Adrenal gland (tissue), 19 donors: ENCODE measurements at regions of chr16 and their contacts with region 1.

Region 1: DNA sequence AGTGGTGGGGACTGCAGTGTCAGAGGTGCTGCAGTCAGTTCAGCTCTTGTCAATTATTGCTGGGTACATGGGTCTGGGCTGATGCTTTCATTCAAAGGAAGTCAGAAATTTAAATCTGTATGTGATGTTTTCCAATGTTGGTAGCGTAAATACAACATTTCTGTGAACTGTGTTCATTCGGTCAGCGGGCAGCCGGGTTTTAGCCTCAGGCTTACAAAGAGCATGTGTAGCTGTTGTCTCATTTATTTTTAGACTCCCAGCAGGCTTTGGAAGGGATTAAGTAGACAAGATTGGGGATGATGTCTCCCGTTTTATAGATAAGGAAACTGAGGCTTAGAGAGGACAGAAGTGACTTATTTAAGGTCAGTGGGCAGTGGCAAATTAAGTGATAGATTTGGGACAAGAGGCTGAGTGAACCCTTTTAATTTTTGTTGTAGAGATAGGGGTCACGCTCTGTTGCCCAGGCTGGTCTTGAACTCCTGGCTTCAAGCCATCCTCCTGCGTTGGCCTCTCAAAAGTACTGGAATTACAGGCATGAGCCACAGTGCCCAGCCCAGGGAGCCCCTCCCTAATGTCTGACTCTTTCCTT is 8.1 kb downstream of the AQP8 start:
- DNase-seq: no peak
- H3K4me3 ChIP-seq: no peak overlapping the region
- H3K27ac ChIP-seq: no peak overlapping the region
- H3K4me1 ChIP-seq: no peaks in the 10 kb centered on the region
- H3K27me3 ChIP-seq: no peaks in the 10 kb centered on the region
- CTCF ChIP-seq: no peak
- POLR2A ChIP-seq: no peak

Region 2: DNA sequence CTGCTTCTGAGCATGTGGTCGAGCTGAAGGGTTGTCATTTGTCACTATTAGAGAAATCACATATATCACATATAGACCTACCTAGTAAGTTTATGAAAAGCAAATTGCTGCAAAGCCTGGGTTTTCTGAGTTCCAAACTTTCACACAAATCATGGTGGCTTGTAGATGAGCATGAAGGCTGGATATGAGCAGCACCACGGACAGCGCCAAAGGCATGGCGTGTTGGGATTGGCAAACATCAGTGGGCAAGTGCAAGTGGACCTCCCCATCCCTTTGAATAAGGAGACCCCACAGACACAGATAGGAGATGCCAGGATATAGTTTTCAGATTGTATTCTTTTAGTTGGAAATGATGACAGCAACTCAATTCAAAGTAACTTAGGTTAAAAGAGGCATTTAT is 1046.3 kb before region 1 on chr16:
- intact Hi-C with region 1: no loop called
- DNase-seq: no peak
- H3K4me3 ChIP-seq: no peak overlapping the region
- H3K27ac ChIP-seq: no peak overlapping the region
- H3K4me1 ChIP-seq: no peaks in the 10 kb centered on the region
- H3K27me3 ChIP-seq: no peaks in the 10 kb centered on the region
- CTCF ChIP-seq: no peak
- POLR2A ChIP-seq: no peak

Region 3: DNA sequence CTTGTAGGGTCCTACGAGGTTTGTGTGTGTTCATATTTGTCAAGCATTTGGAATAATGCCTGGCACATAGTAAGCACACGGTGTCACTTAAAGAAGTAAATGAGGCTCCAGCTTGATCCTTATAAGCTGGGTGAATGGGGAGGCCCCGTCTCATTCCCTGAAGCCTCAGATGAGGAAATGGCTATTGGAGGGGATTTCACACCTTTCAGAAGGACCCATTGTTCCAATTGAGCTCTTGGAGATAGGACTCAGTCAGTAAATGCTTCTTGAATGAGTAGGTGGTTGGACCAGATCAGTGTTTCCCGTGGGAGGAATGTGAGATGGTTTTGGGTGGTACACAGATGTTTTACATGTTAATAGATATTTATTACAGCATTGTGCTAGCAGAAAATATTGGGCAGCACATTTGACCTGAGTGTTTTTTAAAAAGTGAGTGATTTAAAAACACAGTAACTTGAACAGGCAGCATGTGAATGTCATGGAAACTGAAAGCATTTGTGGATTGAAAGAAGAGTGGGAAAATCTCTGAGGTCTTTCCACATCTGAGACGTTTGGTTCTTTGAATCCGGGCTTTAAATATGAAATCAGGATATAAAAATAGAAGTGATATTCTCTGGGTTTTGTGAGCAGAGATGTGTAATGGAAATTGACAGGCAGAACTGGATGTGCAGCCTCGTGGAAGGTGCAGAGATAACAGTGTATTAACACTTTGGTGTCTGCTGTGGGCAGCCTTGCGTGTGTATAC is 173.2 kb before region 1 on chr16:
- intact Hi-C with region 1: loop called (anchors 5 to 10 kb)
- DNase-seq: peak in 2 of 7 donors; percentile 29 to 39
- H3K4me3 ChIP-seq: peak overlapping the region in 1 of 4 donors; percentile 37
- H3K27ac ChIP-seq: peak overlapping the region; percentile 12 to 76 (median 72)
- H3K4me1 ChIP-seq: peaks cover 3 to 32% of the 10 kb centered on the region in 2 donors
- H3K27me3 ChIP-seq: no peaks in the 10 kb centered on the region
- CTCF ChIP-seq: no peak
- POLR2A ChIP-seq: peak in 1 of 2 donors; percentile 22

Region 4: GRCh38 chr16:25126820-25127232 is 98.0 kb before region 1 on chr16:
- intact Hi-C with region 1: loop called in 1 of 2 experiments (anchors 2 kb)
- DNase-seq: peak; percentile 22 to 73 (median 70)
- H3K4me3 ChIP-seq: no peak overlapping the region
- H3K27ac ChIP-seq: no peak overlapping the region
- H3K4me1 ChIP-seq: peaks cover 9 to 19% of the 10 kb centered on the region in 2 donors
- H3K27me3 ChIP-seq: no peaks in the 10 kb centered on the region
- CTCF ChIP-seq: peak; percentile 52 to 87 (median 78)
- POLR2A ChIP-seq: no peak

Region 5: DNA sequence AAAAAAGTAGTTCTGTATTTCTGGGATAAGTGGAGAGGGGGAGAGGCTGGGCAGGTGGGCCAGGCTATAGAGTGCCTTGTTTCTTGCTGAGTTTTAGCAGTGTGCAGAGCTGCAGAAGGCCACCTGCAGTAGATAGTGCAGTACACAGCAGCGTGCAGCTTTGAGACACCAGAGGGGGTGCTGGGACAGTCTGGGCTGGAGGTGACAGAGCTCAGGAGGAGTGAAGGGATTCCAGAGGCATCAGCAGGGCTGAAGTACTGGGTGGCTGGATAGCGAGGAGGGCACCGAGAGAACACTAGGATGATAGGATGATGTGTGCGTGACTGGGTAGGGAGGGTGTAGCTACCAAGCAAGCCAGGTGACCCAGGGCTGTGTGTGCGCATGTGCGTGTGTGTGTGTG is 86.7 kb before region 1 on chr16:
- intact Hi-C with region 1: no loop called
- DNase-seq: no peak
- H3K4me3 ChIP-seq: no peak overlapping the region
- H3K27ac ChIP-seq: no peak overlapping the region
- H3K4me1 ChIP-seq: no peaks in the 10 kb centered on the region
- H3K27me3 ChIP-seq: no peaks in the 10 kb centered on the region
- CTCF ChIP-seq: no peak
- POLR2A ChIP-seq: no peak